Activated CD4-positive, alpha-beta memory T cell treated with anti-CD3 and anti-CD28 coated beads for 36 hours (primary cell): ENCODE measurements at regions of chr17 and their contacts with region 1.

Region 1: GRCh38 chr17:49556223-49556971 is 19.3 kb upstream of the NXPH3 start:
- DNase-seq: peak; percentile 89
- H3K4me3 Mint-ChIP-seq: no peak overlapping the region
- H3K27ac Mint-ChIP-seq: no peak overlapping the region
- H3K4me1 Mint-ChIP-seq: peaks cover 5% of the 10 kb centered on the region
- H3K27me3 Mint-ChIP-seq: peaks cover 3% of the 10 kb centered on the region

Region 2: GRCh38 chr17:49290690-49291359 is 265.6 kb before region 1 on chr17:
- CTCF ChIA-PET with region 1: interaction called, 4 read pairs
- POLR2A ChIA-PET with region 1: no interaction called
- intact Hi-C with region 1: loop called (anchors 10 kb)
- DNase-seq: no peak
- H3K4me3 Mint-ChIP-seq: no peak overlapping the region
- H3K27ac Mint-ChIP-seq: no peak overlapping the region
- H3K4me1 Mint-ChIP-seq: peaks cover 15% of the 10 kb centered on the region
- H3K27me3 Mint-ChIP-seq: no peaks in the 10 kb centered on the region

Region 3: GRCh38 chr17:49414622-49415350 is 141.6 kb before region 1 on chr17 and contains the start of gene PHB1:
- CTCF ChIA-PET with region 1: interaction called, 167 read pairs
- POLR2A ChIA-PET with region 1: no interaction called
- intact Hi-C with region 1: no loop called
- DNase-seq: peak; percentile 98
- H3K4me3 Mint-ChIP-seq: peak within 1 kb of the TSS; percentile 97
- H3K27ac Mint-ChIP-seq: peak within 1 kb of the TSS; percentile 76
- H3K4me1 Mint-ChIP-seq: peaks cover 19% of the 10 kb centered on the region
- H3K27me3 Mint-ChIP-seq: no peaks in the 10 kb centered on the region
- total RNA-seq, gene PHB1: 280 to 295 TPM

Region 4: GRCh38 chr17:49454050-49454449 is 102.3 kb before region 1 on chr17:
- CTCF ChIA-PET with region 1: interaction called, 13 read pairs
- POLR2A ChIA-PET with region 1: no interaction called
- intact Hi-C with region 1: no loop called
- DNase-seq: no peak
- H3K4me3 Mint-ChIP-seq: no peak overlapping the region
- H3K27ac Mint-ChIP-seq: no peak overlapping the region
- H3K4me1 Mint-ChIP-seq: peaks cover 3% of the 10 kb centered on the region
- H3K27me3 Mint-ChIP-seq: peaks cover 22% of the 10 kb centered on the region

Region 5: GRCh38 chr17:49585422-49586027 is 29.1 kb after region 1 on chr17:
- CTCF ChIA-PET with region 1: no interaction called
- POLR2A ChIA-PET with region 1: no interaction called
- intact Hi-C with region 1: no loop called
- DNase-seq: no peak
- H3K4me3 Mint-ChIP-seq: no peak overlapping the region
- H3K27ac Mint-ChIP-seq: no peak overlapping the region
- H3K4me1 Mint-ChIP-seq: no peaks in the 10 kb centered on the region
- H3K27me3 Mint-ChIP-seq: no peaks in the 10 kb centered on the region

Region 6: DNA sequence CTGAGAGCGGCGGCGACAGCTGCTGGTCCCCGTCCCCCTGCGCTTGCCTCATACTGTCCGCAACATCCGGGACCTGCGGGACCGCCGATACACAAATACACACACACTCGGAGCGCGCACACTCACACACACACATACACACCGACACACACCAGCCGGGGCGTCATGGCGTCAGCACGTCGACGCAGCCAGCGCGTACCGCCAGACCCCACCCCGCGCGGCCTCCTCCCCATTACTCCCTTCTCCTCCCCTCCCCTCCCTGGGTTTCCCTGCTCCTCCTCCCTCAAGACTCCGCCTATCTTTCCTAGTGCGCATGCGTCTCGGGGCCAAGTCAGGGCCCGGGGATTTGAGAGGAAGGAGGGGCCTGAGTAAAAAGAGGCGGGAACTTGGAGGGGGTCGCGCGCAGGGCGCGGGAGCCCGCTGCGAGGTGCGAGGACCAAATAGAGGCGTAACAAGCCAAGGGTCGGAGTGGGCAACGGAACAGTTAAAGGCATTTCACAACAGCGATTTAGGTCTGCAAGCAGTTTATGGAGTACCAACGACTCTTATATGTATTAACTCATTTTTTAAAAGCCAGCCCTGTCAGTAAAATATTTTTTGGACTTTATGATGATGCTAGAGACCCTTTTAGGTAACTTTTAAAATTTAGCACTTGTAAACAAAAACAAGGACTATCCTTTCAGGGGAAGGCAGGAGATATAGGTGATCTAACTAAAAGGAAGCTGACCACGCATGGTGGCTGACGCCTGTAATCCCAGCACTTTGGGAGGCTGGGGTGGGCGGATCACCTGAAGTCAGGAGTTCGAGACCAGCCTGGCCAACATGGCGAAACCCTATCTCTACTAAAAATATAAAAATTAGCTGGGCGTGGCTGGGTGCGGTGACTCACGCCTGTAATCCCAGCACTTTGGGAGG is 121.8 kb after region 1 on chr17 and contains the start of gene SPOP:
- CTCF ChIA-PET with region 1: interaction called, 10 read pairs
- POLR2A ChIA-PET with region 1: no interaction called
- intact Hi-C with region 1: no loop called
- DNase-seq: peak; percentile 100
- H3K4me3 Mint-ChIP-seq: peak within 1 kb of the TSS; percentile 95
- H3K27ac Mint-ChIP-seq: peak within 1 kb of the TSS; percentile 99
- H3K4me1 Mint-ChIP-seq: peaks cover 37% of the 10 kb centered on the region
- H3K27me3 Mint-ChIP-seq: peaks cover 4% of the 10 kb centered on the region
- total RNA-seq, gene SPOP: 53.4 to 60.0 TPM

Region 7: GRCh38 chr17:49707608-49708514 is 151.5 kb after region 1 on chr17 and contains the start of gene SLC35B1:
- CTCF ChIA-PET with region 1: interaction called, 15 read pairs
- POLR2A ChIA-PET with region 1: no interaction called
- intact Hi-C with region 1: no loop called
- DNase-seq: peak; percentile 99
- H3K4me3 Mint-ChIP-seq: peak within 1 kb of the TSS; percentile 91
- H3K27ac Mint-ChIP-seq: peak within 1 kb of the TSS; percentile 98
- H3K4me1 Mint-ChIP-seq: peaks cover 42% of the 10 kb centered on the region
- H3K27me3 Mint-ChIP-seq: no peaks in the 10 kb centered on the region
- total RNA-seq, gene SLC35B1: 48.3 to 54.1 TPM

Region 8: DNA sequence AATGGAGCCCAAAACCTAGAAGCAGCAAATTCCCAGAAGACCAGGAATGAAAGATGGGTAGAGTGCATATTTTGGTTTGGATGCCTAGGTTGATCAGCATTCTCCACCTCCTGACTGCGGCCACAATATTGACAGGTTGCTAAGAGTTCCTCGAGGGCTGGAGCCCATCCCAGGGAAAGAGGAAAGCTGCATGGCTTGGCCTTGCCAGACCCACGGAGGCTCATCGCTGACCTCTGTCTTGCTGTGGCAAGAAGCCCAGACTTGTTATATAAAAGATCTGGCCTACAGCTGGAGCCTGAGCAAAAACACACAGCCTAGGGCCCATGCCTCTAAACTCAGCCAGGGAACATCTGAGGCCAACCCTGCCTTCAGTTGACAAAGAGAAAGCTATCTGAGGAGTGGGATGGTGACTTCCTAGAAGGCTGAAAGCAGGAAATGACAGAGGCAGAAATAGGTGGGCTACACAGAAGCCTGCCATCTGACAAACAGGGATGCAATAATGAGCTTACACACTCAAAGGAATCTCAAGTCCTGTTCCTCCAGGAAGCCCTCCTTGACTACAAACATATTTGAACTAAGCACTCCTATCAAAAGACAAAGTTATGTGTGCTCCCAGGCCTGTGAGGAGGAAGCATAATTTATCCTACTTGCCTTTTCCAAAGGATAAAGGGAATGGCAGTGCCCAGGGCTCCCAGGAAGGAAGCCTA is 173.8 kb after region 1 on chr17:
- CTCF ChIA-PET with region 1: no interaction called
- POLR2A ChIA-PET with region 1: no interaction called
- intact Hi-C with region 1: no loop called
- DNase-seq: no peak
- H3K4me3 Mint-ChIP-seq: no peak overlapping the region
- H3K27ac Mint-ChIP-seq: peak overlapping the region; percentile 61
- H3K4me1 Mint-ChIP-seq: peaks cover 54% of the 10 kb centered on the region
- H3K27me3 Mint-ChIP-seq: no peaks in the 10 kb centered on the region